ENCODE measurements at regions of chr2 and their contacts with region 1.

Region 1: DNA sequence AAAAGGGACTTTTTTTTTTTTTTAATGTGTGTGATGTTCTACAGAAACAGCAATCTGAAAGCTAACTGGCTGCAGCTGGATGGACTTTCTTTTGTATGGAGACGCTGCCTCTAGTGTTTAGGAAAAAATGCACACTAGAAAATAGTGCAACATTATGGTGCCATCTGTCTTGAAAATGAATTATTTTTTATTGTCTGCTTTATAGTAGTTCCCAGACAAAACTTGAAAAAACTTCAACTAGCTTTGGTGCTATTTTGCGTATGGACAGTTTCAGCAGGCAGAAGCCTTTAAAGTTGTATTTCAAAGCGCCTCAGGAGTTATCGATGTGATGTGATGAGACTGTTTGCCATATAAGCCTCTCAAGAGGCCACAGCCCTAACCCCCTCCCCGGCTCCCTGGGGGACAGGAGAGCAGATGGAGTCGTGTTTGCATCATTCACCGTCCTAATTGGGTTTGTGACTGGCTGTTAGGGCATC is 86.9 kb downstream of the LTBP1 start:
- DNase-seq: no peak
- ATAC-seq: peak; percentile 77
- H3K4me3 ChIP-seq: peak overlapping the region; percentile 15 to 97
- H3K27ac ChIP-seq: peak overlapping the region in 1 of 2 donors; percentile 57
- H3K4me1 ChIP-seq: no peaks in the 10 kb centered on the region
- H3K27me3 ChIP-seq: no peaks in the 10 kb centered on the region

Region 2: GRCh38 chr2:32772638-32773447 is 260.8 kb before region 1 on chr2:
- intact Hi-C with region 1: loop called (anchors 2 to 5 kb)
- DNase-seq: no peak
- ATAC-seq: peak; percentile 54
- H3K4me3 ChIP-seq: no peak overlapping the region
- H3K27ac ChIP-seq: no peak overlapping the region
- H3K4me1 ChIP-seq: no peaks in the 10 kb centered on the region
- H3K27me3 ChIP-seq: no peaks in the 10 kb centered on the region

Region 3: DNA sequence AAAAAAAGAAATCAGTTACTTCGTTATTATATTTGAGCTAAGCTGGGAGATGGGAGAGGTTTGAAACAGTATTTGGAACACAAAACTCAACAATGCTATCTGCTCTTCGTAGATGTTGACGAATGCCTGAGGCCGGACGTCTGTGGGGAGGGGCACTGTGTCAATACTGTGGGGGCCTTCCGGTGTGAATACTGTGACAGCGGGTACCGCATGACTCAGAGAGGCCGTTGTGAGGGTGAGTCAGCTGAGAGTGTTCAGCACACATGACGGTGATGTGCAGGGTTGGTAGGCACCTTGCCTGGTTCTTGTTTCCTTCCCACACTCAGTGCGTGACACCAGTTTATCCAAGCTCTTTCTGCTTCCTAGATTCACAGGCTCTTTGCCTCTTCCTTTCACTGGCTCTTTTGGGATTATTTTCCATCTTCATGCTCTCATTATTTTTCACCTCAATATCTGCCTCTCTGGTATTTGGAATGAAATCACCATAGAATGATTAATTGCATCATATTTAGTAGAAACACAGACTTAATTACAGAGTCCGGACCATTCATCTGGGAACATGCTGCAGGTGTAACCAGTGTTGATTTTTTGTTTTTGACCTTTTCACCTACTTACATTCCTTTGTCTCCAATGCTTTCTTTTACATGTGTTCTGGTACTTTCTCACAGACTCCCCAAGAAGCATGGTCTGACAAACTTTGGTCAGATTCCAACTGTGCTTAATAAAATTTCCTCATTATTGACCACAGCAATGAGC is 242.2 kb after region 1 on chr2:
- intact Hi-C with region 1: loop called (anchors 2 to 10 kb)
- DNase-seq: peak; percentile 86 to 88
- ATAC-seq: peak; percentile 77
- H3K4me3 ChIP-seq: no peak overlapping the region
- H3K27ac ChIP-seq: peak overlapping the region; percentile 58 to 85
- H3K4me1 ChIP-seq: peaks cover 2 to 3% of the 10 kb centered on the region in 2 donors
- H3K27me3 ChIP-seq: no peaks in the 10 kb centered on the region

Region 4: GRCh38 chr2:33372940-33373553 is 339.4 kb after region 1 on chr2:
- intact Hi-C with region 1: loop called (anchors 5 to 10 kb)
- DNase-seq: no peak
- ATAC-seq: no peak
- H3K4me3 ChIP-seq: no peak overlapping the region
- H3K27ac ChIP-seq: no peak overlapping the region
- H3K4me1 ChIP-seq: peaks cover 3 to 5% of the 10 kb centered on the region in 2 donors
- H3K27me3 ChIP-seq: no peaks in the 10 kb centered on the region

Region 5: GRCh38 chr2:33583194-33583938 is 549.7 kb after region 1 on chr2:
- intact Hi-C with region 1: loop called (anchors 5 kb)
- DNase-seq: no peak
- ATAC-seq: peak; percentile 81
- H3K4me3 ChIP-seq: no peak overlapping the region
- H3K27ac ChIP-seq: no peak overlapping the region
- H3K4me1 ChIP-seq: peaks cover 0 to 2% of the 10 kb centered on the region in 2 donors
- H3K27me3 ChIP-seq: no peaks in the 10 kb centered on the region